ENCODE measurements at regions of chr16 and their contacts with region 1.

Region 1: GRCh38 chr16:55701442-55702319 is 45.9 kb downstream of the SLC6A2 start:
- DNase-seq: peak; percentile 78
- ATAC-seq: peak; percentile 70

Region 2: DNA sequence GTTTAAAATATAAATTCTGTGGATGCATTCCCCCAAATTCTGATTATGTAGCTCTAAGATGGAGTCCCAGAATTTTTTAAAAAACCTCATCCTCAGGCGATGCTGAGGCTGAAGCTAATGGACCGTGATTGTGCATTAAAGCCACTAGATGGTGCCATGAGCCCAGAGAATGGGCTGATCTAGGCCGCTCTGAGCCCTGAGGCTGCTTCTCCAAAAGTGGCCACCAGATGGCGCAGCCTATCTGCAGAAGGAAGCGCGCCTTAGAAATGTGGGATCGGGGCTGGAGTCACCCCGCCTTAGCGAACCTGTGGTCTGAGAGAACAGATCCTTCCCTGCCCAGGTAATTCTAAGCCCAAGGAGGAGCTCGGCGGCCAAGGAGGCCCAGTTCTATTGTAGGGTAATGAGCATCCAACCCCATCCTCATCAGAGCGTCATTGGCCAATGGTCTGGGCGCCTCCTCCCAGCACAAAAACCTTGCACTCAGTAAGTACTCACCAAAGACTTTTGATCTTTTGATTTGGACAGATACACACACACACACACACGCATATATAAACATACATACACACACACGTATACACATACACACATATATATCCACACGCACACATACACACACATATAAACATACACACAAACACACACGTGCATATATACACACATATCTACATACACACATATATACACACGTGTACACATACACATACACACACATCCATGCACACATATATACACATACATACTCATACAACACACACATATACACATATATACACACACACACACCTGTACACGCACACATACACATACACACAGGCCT is 236.4 kb before region 1 on chr16:
- intact Hi-C with region 1: loop called (anchors 5 kb)
- DNase-seq: peak; percentile 95
- ATAC-seq: peak; percentile 92

Measured in sciatic nerve (tissue), 2 donors.